AG04450 (cell line): ENCODE measurements at regions of chr17 and their contacts with region 1.

Region 1: DNA sequence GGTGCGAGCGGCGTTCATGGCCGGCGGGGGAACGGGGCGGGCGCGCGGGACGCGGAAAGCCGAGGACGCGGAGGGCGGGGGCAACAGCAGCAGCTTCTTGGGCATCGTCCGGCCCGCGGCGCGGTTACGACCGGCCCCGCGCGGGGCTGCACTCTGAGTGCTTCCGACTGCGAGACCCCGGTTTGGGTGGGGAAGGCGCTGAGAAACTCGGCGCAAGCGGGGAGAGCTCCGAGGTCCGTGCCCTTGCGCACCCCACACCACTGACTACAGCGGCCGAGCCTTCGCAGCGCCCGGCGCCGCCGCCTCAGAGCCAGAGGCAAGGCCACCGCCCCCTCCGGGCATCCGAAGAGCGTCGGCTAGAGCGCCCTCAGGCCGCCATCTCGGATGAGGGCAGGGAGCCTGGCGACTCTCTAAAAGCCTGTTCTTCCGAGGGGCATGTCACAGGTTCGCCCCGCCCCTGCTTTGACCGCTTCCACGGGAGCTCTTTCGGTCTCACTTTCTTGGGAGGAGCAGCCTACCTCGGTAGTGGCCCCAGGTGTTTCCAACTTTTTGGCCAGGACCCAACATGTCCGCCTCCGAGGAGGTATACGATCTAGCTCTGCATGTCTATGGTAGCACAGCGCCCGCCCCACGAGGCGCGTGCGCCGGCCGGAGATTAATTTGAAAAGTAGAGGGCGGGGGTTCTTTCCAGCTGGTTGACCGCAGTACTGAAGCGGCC is at the start of gene PRPSAP1:
- DNase-seq: peak; percentile 66
- H3K4me3 ChIP-seq: peak within 1 kb of the TSS; percentile 84
- H3K27ac ChIP-seq: peak within 1 kb of the TSS; percentile 85
- H3K27me3 ChIP-seq: no peaks in the 10 kb centered on the region
- CTCF ChIP-seq: peak; percentile 66
- polyA plus RNA-seq, gene PRPSAP1: 48.8 and 49.9 TPM in 2 replicates

Region 2: DNA sequence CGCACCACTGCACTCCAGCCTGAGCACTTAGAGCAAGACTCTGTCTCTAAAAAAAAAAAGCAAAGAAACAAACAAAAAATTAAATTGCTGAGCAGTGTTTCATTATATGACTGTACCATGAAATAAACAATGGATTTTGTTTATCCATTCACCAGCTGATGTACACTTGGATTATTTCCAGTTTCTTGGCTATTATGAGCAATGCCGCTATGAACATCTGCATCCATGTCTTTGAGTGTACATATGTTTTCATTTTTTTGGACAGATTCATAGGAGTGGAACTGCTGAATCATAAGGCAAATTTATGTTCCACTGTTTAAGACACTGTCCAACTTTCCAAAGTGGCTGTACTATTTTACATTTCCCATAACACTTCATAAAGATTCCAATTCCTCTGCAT is 121.4 kb before region 1 on chr17:
- CTCF ChIA-PET with region 1: no interaction called
- POLR2A ChIA-PET with region 1: no interaction called
- DNase-seq: peak; percentile 91
- H3K4me3 ChIP-seq: no peak overlapping the region
- H3K27ac ChIP-seq: peak overlapping the region; percentile 11
- H3K27me3 ChIP-seq: peaks cover 9% of the 10 kb centered on the region
- CTCF ChIP-seq: no peak

Region 3: DNA sequence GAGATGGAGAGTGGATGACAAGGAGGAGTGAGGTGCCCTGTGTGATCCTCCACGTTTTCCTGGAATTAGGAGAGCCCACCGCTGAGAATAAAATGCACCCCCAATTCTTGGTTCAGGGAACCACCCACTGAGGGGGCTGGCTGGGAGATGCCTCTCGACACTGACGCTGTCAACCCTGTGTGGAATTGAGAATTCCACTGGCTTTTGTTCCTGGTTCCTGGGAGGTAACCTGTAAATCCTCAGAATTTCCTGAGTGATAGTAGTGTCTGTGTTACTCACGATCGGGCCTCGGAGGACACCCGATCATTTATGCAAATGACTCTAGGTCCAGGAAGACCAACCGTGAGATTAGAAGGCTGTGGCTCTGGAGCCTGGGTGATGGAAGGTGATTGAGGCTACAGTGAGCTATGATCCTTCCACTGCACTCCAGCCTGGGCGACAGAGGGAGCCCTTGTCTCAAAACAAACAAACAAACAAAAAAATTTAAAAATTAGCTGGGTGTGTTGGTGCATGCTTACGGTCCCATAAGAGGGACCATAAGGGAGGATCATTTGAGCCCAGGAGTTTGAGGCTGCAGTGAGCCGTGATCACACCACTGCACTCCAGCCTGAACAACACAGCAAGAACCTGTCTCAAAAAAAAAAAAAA is 11.6 kb after region 1 on chr17:
- CTCF ChIA-PET with region 1: interaction called, 20 read pairs
- POLR2A ChIA-PET with region 1: interaction called, 6 read pairs
- DNase-seq: no peak
- H3K4me3 ChIP-seq: no peak overlapping the region
- H3K27ac ChIP-seq: no peak overlapping the region
- H3K27me3 ChIP-seq: no peaks in the 10 kb centered on the region
- CTCF ChIP-seq: no peak

Region 4: GRCh38 chr17:76370261-76370993 is 16.7 kb after region 1 on chr17:
- CTCF ChIA-PET with region 1: interaction called, 20 read pairs
- POLR2A ChIA-PET with region 1: interaction called, 6 read pairs
- DNase-seq: peak; percentile 80
- H3K4me3 ChIP-seq: no peak overlapping the region
- H3K27ac ChIP-seq: peak overlapping the region; percentile 96
- H3K27me3 ChIP-seq: no peaks in the 10 kb centered on the region
- CTCF ChIP-seq: peak; percentile 72